Aorta (tissue), 5 donors: ENCODE measurements at regions of chr19 and their contacts with region 1.

Region 1: DNA sequence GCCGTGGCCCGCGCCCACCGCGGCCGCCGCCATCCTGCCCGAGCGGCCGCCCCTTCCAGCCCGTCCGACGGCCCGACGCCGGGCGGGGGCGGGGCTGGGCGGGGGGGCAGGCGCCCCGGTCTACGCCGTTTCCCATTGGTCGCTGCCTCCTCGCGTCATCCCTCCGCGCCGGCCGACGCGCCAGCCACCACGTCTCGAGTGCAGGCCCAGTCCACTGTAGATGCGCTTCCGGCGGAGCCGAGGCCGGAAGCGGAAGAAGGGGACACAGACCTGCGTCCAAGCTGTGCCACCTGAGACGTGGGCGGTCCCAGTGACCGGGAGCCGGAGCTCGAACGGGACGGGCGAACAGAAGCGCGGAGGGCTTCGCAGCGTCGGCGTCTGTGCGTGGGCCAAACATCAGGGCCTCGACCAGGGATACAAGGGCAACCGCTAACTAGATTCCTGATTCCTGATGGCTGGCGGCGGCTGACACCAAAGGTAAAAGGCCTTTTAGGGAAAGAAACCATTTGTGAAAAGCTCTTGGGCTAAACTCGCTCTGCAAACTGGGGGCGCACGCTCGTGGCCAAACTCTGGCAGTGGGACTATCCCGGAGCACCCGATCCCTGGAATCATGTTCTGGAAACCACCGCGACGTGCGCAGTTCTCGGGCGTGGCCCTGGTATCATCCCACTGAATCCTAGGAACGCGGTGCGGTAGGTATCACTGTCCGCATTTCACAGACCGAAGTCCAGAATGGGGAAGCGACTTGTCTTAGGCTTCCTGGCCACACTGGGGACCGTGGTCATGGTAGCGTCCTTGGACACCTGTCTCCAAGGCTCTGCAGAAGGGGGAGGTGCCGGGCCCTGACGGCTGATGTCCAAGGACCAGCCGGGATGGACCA is at the start of gene SLC35E1:
- DNase-seq: peak; percentile 97 to 98
- ATAC-seq: peak; percentile 96
- H3K4me3 ChIP-seq: peak within 1 kb of the TSS; percentile 74 to 80
- H3K27ac ChIP-seq: peak within 1 kb of the TSS in 1 of 2 donors; percentile 77
- H3K4me1 ChIP-seq: no peaks in the 10 kb centered on the region
- H3K27me3 ChIP-seq: no peaks in the 10 kb centered on the region
- total RNA-seq, gene SLC35E1: 33.9 to 37.7 TPM

Region 2: GRCh38 chr19:16283210-16284061 is 289.1 kb before region 1 on chr19:
- intact Hi-C with region 1: no loop called
- DNase-seq: peak; percentile 89 to 93
- ATAC-seq: peak; percentile 88
- H3K4me3 ChIP-seq: no peak overlapping the region
- H3K27ac ChIP-seq: peak overlapping the region; percentile 81 to 90
- H3K4me1 ChIP-seq: no peaks in the 10 kb centered on the region
- H3K27me3 ChIP-seq: no peaks in the 10 kb centered on the region

Region 3: GRCh38 chr19:16542910-16543472 is 29.6 kb before region 1 on chr19:
- intact Hi-C with region 1: loop called in 1 of 2 experiments (anchors 1 kb)
- DNase-seq: no peak
- ATAC-seq: no peak
- H3K4me3 ChIP-seq: peak overlapping the region; percentile 9 to 90
- H3K27ac ChIP-seq: peak overlapping the region in 1 of 2 donors; percentile 6
- H3K4me1 ChIP-seq: peaks cover 0 to 6% of the 10 kb centered on the region in 2 donors
- H3K27me3 ChIP-seq: no peaks in the 10 kb centered on the region

Region 4: GRCh38 chr19:16608290-16608739 is 35.7 kb after region 1 on chr19:
- intact Hi-C with region 1: no loop called
- DNase-seq: no peak
- ATAC-seq: peak; percentile 68
- H3K4me3 ChIP-seq: no peak overlapping the region
- H3K27ac ChIP-seq: no peak overlapping the region
- H3K4me1 ChIP-seq: no peaks in the 10 kb centered on the region
- H3K27me3 ChIP-seq: no peaks in the 10 kb centered on the region

Region 5: DNA sequence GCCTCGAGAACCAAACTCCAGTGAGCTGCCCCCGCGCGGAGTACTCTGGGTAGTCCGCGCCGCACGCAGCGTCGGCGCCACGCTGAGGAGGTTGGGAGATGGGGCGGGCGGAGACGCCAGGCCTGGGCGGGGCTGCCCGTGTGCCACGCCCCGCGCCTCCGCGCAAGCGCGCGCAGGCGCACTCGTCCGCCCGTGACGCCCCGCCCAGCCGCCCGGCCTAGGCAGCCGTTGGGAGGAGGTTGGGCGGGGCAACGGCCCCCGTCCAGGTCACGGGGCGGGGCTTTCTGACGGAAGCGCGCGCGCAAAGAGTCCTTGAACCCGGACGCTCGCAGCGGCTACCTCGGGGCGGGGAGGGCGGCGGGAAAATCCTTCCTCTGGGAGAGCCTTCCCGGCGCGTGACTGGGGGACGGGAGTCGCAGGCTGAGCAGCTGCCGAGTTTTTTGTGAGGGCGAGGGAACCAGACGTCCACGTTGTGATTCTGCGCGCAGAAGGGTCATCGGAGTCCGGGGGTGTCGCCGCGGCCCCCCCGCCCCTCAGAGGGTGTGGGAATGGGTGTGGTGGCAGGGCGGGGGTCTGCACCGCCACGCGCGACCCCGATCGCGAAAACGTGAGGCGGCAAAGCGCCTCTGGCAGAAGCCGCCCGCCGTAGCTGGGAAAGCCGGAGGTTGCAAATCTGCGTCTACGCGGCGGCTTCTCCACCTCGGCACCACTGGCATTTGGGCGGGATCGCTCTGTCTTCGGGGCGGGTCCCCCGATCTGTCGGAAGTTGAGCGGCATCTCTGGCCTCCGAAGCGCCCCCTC is 55.8 kb after region 1 on chr19 and contains the start of gene MED26:
- intact Hi-C with region 1: loop called in 1 of 2 experiments (anchors 2 kb)
- DNase-seq: peak; percentile 96 to 99
- ATAC-seq: peak; percentile 99
- H3K4me3 ChIP-seq: peak within 1 kb of the TSS; percentile 88 to 96
- H3K27ac ChIP-seq: peak within 1 kb of the TSS in 1 of 2 donors; percentile 38
- H3K4me1 ChIP-seq: no peaks in the 10 kb centered on the region
- H3K27me3 ChIP-seq: no peaks in the 10 kb centered on the region
- total RNA-seq, gene MED26: 8.0 to 8.4 TPM